HEK293T (cell line): ENCODE measurements at regions of chr4 and their contacts with region 1.

Region 1: DNA sequence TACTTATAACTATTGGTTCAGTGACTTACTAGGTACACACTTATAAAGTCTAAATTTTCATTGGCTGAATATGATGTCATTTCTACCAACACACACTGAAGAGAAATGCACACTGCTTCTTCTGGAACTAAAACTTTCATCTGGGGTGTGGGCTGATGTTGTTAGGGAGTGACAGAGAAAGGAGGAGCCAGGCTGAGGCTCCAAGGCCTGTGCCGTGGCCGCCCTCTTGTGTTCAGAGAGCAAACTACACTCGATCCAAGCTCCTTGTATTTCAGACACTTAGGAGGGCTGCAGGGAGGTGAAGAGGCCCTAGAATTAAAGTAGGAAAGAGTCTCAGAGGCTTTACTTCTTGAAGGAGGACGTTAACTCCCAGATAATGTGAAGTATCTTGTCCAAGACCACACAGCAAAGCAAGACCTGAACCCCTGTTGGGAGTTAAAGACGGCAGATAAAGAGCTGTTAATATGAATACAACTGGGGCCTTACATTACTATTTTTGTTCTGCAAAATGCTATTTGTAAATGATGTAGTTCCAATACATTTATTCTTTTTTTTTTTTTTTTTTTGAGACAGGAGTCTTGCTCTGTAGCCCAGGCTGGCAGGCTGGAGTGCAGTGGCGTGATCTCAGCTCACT is 137.5 kb downstream of the AFAP1 start:
- DNase-seq: peak; percentile 84

Region 2: DNA sequence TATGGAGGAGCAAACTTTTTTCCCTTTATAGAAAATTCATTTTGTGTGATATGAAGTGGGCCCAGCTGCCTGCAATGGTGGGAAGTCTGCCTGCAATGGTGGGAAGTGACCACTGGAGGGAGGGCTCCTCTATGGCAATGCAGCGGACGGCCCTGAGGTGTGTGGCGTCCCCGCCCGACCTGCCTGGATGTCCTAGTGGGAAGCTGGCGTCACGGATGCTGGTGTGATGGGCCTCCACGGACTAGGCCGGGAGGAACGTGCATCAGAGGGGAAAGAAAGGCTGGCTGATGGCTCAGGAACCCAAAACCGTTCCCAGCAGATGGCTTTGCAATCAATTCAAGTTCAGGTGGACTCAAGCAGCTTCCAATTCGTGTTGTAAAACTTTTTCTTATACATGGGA is 40.5 kb before region 1 on chr4:
- CTCF ChIA-PET with region 1: interaction called, 16 read pairs
- POLR2A ChIA-PET with region 1: no interaction called
- DNase-seq: peak; percentile 87

Region 3: DNA sequence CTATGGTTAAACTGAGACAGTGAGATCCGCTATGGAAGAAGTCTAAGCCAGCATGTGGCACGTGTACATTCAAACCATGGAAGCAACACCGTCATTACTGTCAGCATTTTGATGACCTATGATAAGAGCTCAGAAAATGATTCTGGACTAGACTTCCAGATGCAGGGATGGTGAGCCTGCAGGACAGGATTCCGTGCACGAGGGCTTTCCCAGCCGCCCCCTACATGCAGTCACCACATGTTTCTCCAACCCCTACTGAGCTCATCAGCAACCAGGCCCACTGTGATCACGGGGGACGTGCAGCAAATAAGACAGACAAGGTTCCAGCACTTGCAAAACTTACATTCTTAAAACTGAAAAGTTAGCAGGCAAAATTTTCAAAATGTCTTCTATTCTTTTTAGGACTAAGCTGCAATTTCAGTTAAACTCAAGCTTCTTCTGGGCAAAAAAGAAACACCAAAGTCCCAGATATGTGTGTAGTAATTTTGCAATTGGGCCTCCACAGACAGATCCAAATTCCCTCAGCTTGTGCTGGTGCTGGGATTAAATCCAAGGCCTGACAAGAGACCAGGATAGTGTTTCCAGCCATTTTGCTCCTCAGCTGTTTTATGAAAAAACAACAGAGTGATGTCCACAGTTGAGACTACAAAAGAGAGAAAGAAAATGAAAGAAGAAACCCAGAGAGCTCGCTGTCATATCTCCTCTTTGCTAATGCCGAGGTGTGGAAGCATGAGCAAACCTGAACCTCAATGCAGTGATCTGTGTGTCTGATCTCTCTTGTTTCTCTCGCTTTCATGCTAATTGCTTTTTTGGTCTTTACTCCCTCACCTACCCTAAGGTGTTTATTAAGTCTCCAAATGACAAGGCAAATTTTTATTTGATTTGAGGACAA is 19.3 kb after region 1 on chr4:
- CTCF ChIA-PET with region 1: interaction called, 13 read pairs
- POLR2A ChIA-PET with region 1: no interaction called
- DNase-seq: no peak

Region 4: GRCh38 chr4:7843831-7844593 is 41.8 kb after region 1 on chr4:
- CTCF ChIA-PET with region 1: interaction called, 19 read pairs
- POLR2A ChIA-PET with region 1: no interaction called
- DNase-seq: peak; percentile 85

Region 5: GRCh38 chr4:7987148-7987989 is 185.2 kb after region 1 on chr4:
- CTCF ChIA-PET with region 1: interaction called, 18 read pairs
- POLR2A ChIA-PET with region 1: no interaction called
- DNase-seq: peak; percentile 80